ENCODE measurements at regions of chr16 and their contacts with region 1.

Region 1: DNA sequence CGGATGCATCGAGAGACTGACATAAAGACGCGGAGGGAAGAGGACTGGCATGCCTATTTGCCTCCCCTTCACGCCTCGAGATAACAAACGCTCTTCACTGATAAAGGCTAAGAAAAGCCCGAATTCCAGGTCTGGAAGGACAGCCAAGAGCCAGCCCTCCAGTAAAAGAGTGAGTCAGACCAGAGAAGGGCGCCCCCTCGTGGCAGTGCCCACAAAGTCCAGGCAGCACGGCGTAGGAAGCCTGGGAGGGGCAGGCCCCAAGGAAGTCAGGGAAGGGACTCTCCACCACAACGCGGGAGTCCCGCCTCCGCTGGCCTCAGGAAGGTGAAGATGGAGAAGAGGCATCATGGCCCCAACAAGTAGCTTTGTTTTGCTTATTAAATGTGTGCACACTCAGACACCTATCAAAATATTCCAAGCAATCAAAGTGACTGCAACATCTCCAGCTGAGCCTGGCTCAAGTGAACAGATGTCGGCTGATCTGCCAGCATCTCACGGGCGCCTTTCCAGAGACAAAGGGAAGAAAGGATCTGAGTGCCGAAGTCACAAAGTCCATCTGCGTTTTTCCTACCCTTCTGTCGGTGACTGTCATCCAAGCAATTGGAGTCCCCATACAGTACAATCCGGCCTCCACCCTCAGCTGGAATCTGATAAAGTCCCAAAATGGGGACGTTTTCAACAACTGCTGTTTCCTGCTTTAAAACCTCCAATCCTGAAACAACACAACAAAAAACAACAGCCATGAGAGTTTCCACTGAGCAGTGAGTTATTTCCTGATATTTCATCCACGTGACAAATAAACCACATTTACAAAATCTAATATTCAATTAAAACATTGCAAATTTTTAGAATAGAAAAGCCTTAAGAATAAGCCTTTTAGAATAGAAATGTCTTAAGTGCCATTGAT is 20.4 kb upstream of the SLC38A8 start:
- DNase-seq: peak; percentile 68
- H3K4me3 Mint-ChIP-seq: no peak overlapping the region
- H3K27ac Mint-ChIP-seq: no peak overlapping the region
- H3K4me1 Mint-ChIP-seq: no peaks in the 10 kb centered on the region
- H3K27me3 Mint-ChIP-seq: no peaks in the 10 kb centered on the region
- CTCF ChIP-seq: peak; percentile 89

Region 2: DNA sequence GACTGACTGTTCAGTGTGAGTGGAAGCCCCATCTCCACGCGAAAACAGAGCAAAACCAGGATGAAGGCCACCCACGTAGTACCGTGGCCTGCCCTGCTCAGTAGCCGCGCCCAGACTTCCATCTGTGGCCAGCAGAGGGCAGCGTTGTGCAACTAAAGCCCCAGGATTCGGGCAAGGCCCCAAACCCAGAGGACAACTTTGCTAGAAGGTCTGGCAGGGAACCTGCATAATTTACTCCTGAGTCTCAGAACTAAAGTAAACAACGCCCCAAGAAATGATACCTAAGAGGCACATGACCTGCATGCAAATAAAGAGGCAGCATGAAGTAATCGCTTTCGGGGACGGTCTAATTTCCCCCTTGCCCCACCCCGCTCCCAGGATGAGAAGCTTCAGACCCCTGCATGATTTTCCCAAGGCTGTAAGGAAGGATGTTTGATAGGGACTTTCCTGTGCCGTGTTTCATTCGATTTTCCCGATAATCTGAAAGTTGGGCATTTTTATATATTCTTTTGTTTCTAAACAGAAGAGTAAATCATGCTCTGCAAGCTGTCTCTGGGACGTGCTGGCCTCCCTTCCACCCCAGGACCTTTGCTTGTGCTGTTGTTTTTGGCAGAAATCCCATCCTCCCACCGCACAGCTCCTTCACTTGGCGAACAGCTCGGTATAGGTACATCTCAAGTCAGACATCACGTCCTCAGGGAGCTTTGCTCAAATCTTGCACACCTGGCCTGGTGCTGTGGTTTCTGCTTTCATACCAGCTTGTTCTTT is 236.7 kb before region 1 on chr16:
- CTCF ChIA-PET with region 1: interaction called, 8 read pairs
- POLR2A ChIA-PET with region 1: no interaction called
- intact Hi-C with region 1: loop called (anchors 2 kb)
- DNase-seq: peak; percentile 84
- H3K4me3 Mint-ChIP-seq: no peak overlapping the region
- H3K27ac Mint-ChIP-seq: no peak overlapping the region
- H3K4me1 Mint-ChIP-seq: peaks cover 8% of the 10 kb centered on the region
- H3K27me3 Mint-ChIP-seq: no peaks in the 10 kb centered on the region
- CTCF ChIP-seq: peak; percentile 87

Region 3: GRCh38 chr16:83926726-83927397 is 136.1 kb before region 1 on chr16:
- CTCF ChIA-PET with region 1: interaction called, 15 read pairs
- POLR2A ChIA-PET with region 1: interaction called, 4 read pairs
- intact Hi-C with region 1: loop called (anchors 1 kb)
- DNase-seq: peak; percentile 86
- H3K4me3 Mint-ChIP-seq: peak overlapping the region; percentile 62
- H3K27ac Mint-ChIP-seq: no peak overlapping the region
- H3K4me1 Mint-ChIP-seq: peaks cover 5% of the 10 kb centered on the region
- H3K27me3 Mint-ChIP-seq: no peaks in the 10 kb centered on the region
- CTCF ChIP-seq: peak; percentile 86

Region 4: GRCh38 chr16:83967806-83968305 is 95.1 kb before region 1 on chr16 and contains the start of gene NECAB2:
- CTCF ChIA-PET with region 1: interaction called, 220 read pairs
- POLR2A ChIA-PET with region 1: no interaction called
- intact Hi-C with region 1: loop called (anchors 1 kb)
- DNase-seq: peak; percentile 23
- H3K4me3 Mint-ChIP-seq: peak within 1 kb of the TSS; percentile 69
- H3K27ac Mint-ChIP-seq: no peak within 1 kb of the TSS
- H3K4me1 Mint-ChIP-seq: peaks cover 6% of the 10 kb centered on the region
- H3K27me3 Mint-ChIP-seq: peaks cover 10% of the 10 kb centered on the region
- CTCF ChIP-seq: peak; percentile 86
- total RNA-seq, gene NECAB2: 2.3 and 3.6 TPM in 2 replicates

Region 5: DNA sequence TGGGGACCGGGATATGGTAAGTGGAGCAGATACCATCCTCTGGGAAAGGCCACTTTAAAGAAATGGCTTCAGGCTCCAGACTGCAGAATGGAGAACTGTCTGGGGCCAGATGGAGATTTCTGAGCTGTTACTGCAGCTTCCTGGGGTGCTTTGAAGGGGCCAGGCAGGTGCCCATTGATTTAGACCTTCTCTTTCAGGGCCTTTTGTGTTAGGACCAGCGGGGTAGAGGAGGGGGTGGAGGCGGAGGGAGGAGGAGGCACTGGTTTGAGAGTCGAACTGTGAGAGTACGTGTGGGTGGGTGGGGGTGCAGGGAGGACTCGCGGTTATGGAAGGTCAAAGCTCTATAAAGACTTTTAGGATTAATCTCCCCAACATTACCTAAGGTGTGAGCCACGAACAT is 83.5 kb before region 1 on chr16:
- CTCF ChIA-PET with region 1: interaction called, 14 read pairs
- POLR2A ChIA-PET with region 1: no interaction called
- intact Hi-C with region 1: no loop called
- DNase-seq: no peak
- H3K4me3 Mint-ChIP-seq: no peak overlapping the region
- H3K27ac Mint-ChIP-seq: no peak overlapping the region
- H3K4me1 Mint-ChIP-seq: no peaks in the 10 kb centered on the region
- H3K27me3 Mint-ChIP-seq: peaks cover 9% of the 10 kb centered on the region
- CTCF ChIP-seq: no peak

Region 6: DNA sequence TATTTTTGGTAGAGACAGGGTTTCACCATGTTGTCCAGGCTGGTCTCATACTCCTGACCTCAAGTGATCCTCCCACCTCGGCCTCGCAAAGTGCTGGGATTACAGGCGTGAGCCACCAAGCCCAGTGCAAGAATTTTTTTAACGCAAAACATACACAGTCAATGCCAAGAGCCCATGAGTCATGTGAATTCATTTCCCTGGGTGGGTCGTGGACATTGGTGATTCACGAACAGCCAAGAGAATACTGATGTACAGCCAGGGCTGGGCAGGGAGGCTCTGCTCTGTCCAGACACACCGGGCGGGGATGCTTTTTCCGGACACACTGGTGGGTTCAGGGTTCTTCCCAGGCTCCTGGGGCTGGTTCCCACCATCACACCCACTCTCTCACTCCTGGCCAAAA is 38.1 kb before region 1 on chr16:
- CTCF ChIA-PET with region 1: no interaction called
- POLR2A ChIA-PET with region 1: no interaction called
- intact Hi-C with region 1: no loop called
- DNase-seq: no peak
- H3K4me3 Mint-ChIP-seq: no peak overlapping the region
- H3K27ac Mint-ChIP-seq: no peak overlapping the region
- H3K4me1 Mint-ChIP-seq: peaks cover 6% of the 10 kb centered on the region
- H3K27me3 Mint-ChIP-seq: peaks cover 10% of the 10 kb centered on the region
- CTCF ChIP-seq: no peak

Region 7: DNA sequence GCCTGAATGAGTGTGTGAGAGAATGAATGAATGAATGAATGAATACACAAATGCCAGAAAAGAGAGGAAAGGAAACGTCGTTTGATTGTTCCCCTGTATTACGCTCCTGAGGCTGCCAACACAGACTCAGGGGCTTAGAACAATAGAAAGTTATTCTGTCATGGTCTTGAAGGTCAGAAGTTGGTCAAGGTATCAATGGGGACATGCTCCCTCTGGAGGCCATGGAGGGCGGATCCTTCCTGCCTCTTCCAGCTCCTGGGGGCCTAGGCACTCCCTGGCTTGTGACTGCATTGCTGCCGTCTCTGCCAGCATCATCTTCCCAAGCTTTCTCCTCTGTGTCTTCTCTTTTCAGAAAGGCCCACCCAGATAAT is 18.9 kb before region 1 on chr16:
- CTCF ChIA-PET with region 1: interaction called, 24 read pairs
- POLR2A ChIA-PET with region 1: no interaction called
- intact Hi-C with region 1: no loop called
- DNase-seq: peak; percentile 57
- H3K4me3 Mint-ChIP-seq: no peak overlapping the region
- H3K27ac Mint-ChIP-seq: no peak overlapping the region
- H3K4me1 Mint-ChIP-seq: peaks cover 12% of the 10 kb centered on the region
- H3K27me3 Mint-ChIP-seq: peaks cover 31% of the 10 kb centered on the region
- CTCF ChIP-seq: peak; percentile 57

Region 8: DNA sequence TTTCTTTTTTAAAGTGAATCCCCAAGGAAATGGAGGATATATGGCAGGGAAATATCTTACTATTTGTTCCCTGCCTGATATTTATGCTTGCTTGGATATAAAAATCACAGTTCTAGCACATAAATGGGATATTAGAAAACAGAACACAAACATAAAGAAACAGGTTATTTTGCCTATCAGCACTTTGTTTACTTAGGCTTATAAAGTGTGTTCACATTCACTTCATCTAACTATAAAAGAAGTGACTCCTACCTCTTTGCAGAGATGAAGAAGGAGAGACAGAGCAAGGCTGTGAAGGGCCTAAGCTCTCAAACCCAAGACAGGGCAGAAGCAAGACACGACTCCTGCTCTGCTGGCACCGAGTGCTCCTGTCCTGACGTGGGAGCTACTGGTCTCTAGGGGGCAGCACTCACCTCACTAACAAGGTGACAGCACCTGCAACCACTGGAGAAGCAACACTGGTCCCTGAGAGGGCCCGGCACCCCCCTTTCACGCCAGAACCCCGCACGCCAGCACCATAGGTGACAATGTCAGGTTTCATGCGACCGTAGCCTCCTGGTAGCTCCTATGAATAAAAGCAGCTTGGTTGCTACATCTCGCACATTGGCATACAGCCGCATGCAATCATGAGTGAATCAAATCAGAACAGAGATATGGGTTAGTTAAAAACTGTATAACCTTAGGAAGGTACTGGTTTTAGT is 21.7 kb after region 1 on chr16:
- CTCF ChIA-PET with region 1: interaction called, 81 read pairs
- POLR2A ChIA-PET with region 1: no interaction called
- intact Hi-C with region 1: no loop called
- DNase-seq: peak; percentile 77
- H3K4me3 Mint-ChIP-seq: no peak overlapping the region
- H3K27ac Mint-ChIP-seq: no peak overlapping the region
- H3K4me1 Mint-ChIP-seq: no peaks in the 10 kb centered on the region
- H3K27me3 Mint-ChIP-seq: no peaks in the 10 kb centered on the region
- CTCF ChIP-seq: peak; percentile 75

Measured in MCF 10A (cell line).